ENCODE measurements at regions of chr10 and their contacts with region 1.

Region 1: DNA sequence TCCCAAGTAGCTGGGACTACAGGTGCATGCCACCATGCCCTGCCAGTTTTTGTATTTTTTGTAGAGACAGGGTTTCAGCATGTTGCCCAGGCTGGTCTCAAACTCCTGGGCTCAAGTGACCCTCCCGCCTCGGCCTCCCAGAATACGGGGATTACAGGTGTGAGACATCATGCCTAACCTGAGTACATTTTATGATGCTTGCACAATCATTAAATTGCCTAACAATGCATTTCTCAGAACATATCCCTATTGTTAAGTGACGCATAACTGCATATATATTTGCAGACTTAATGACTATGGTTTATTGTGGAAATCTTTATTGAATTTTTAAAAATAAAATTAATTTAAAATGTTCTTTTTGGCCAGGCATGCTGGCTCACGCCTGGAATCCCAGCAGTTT is 30.7 kb downstream of the INA start:
- DNase-seq: no peak
- H3K4me3 ChIP-seq: no peak overlapping the region
- H3K27ac ChIP-seq: no peak overlapping the region
- H3K4me1 ChIP-seq: no peaks in the 10 kb centered on the region
- H3K27me3 ChIP-seq: no peaks in the 10 kb centered on the region
- CTCF ChIP-seq: no peak
- EP300 ChIP-seq: no peak
- POLR2A ChIP-seq: no peak
- RAD21 ChIP-seq: no peak

Region 2: GRCh38 chr10:103225939-103226338 is 81.7 kb before region 1 on chr10:
- CTCF ChIA-PET with region 1: no interaction called
- POLR2A ChIA-PET with region 1: no interaction called
- DNase-seq: no peak
- H3K4me3 ChIP-seq: no peak overlapping the region
- H3K27ac ChIP-seq: no peak overlapping the region
- H3K4me1 ChIP-seq: peaks cover 0 to 5% (median 2%) of the 10 kb centered on the region in 4 experiments; a peak in 1 of 7 replicates
- H3K27me3 ChIP-seq: no peaks in the 10 kb centered on the region; a peak in 1 of 7 replicates
- CTCF ChIP-seq: no peak
- EP300 ChIP-seq: no peak
- POLR2A ChIP-seq: no peak
- RAD21 ChIP-seq: no peak

Region 3: GRCh38 chr10:103333925-103334520 is 26.4 kb after region 1 on chr10:
- CTCF ChIA-PET with region 1: interaction called, 13 read pairs
- POLR2A ChIA-PET with region 1: no interaction called
- DNase-seq: no peak
- H3K4me3 ChIP-seq: no peak overlapping the region
- H3K27ac ChIP-seq: no peak overlapping the region
- H3K4me1 ChIP-seq: no peaks in the 10 kb centered on the region
- H3K27me3 ChIP-seq: no peaks in the 10 kb centered on the region
- CTCF ChIP-seq: peak in 1 of 3 experiments; percentile 26; a peak in 2 of 4 replicates
- EP300 ChIP-seq: no peak
- POLR2A ChIP-seq: no peak
- RAD21 ChIP-seq: no peak; a peak in 2 of 4 replicates